Activated CD8-positive, alpha-beta T cell treated with anti-CD3 and anti-CD28 coated beads for 36 hours (primary cell): ENCODE measurements at regions of chr15 and their contacts with region 1.

Region 1: GRCh38 chr15:40307421-40308211 is at the start of gene PLCB2:
- DNase-seq: peak; percentile 84
- ATAC-seq: peak; percentile 78
- H3K4me3 Mint-ChIP-seq: peak within 1 kb of the TSS; percentile 95
- H3K27ac Mint-ChIP-seq: peak within 1 kb of the TSS; percentile 97
- H3K4me1 Mint-ChIP-seq: peaks cover 36% of the 10 kb centered on the region
- H3K27me3 Mint-ChIP-seq: no peaks in the 10 kb centered on the region
- CTCF ChIP-seq: peak; percentile 35
- total RNA-seq, gene PLCB2: 44.6 to 58.8 TPM

Region 2: GRCh38 chr15:40282144-40282868 is 25.3 kb before region 1 on chr15:
- CTCF ChIA-PET with region 1: interaction called, 595 read pairs
- POLR2A ChIA-PET with region 1: interaction called, 22 read pairs
- intact Hi-C with region 1: loop called (anchors 1 kb)
- DNase-seq: peak; percentile 62
- ATAC-seq: peak; percentile 71
- H3K4me3 Mint-ChIP-seq: peak overlapping the region; percentile 58
- H3K27ac Mint-ChIP-seq: no peak overlapping the region
- H3K4me1 Mint-ChIP-seq: no peaks in the 10 kb centered on the region
- H3K27me3 Mint-ChIP-seq: peaks cover 25% of the 10 kb centered on the region
- CTCF ChIP-seq: peak; percentile 66

Region 3: GRCh38 chr15:40290918-40291574 is 16.6 kb before region 1 on chr15:
- CTCF ChIA-PET with region 1: interaction called, 11 read pairs
- POLR2A ChIA-PET with region 1: interaction called, 8 read pairs
- intact Hi-C with region 1: no loop called
- DNase-seq: no peak
- ATAC-seq: no peak
- H3K4me3 Mint-ChIP-seq: no peak overlapping the region
- H3K27ac Mint-ChIP-seq: no peak overlapping the region
- H3K4me1 Mint-ChIP-seq: no peaks in the 10 kb centered on the region
- H3K27me3 Mint-ChIP-seq: no peaks in the 10 kb centered on the region
- CTCF ChIP-seq: no peak

Region 4: GRCh38 chr15:40323239-40323952 is 15.8 kb after region 1 on chr15 and contains the start of gene INAFM2:
- CTCF ChIA-PET with region 1: interaction called, 156 read pairs
- POLR2A ChIA-PET with region 1: interaction called, 37 read pairs
- intact Hi-C with region 1: no loop called
- DNase-seq: peak; percentile 95
- ATAC-seq: peak; percentile 94
- H3K4me3 Mint-ChIP-seq: peak within 1 kb of the TSS; percentile 71
- H3K27ac Mint-ChIP-seq: no peak within 1 kb of the TSS
- H3K4me1 Mint-ChIP-seq: peaks cover 31% of the 10 kb centered on the region
- H3K27me3 Mint-ChIP-seq: no peaks in the 10 kb centered on the region
- CTCF ChIP-seq: peak; percentile 64
- total RNA-seq, gene INAFM2: 15.0 to 16.9 TPM

Region 5: GRCh38 chr15:40338041-40338657 is 30.5 kb after region 1 on chr15:
- CTCF ChIA-PET with region 1: interaction called, 376 read pairs
- POLR2A ChIA-PET with region 1: interaction called, 12 read pairs
- intact Hi-C with region 1: no loop called
- DNase-seq: peak; percentile 88
- ATAC-seq: peak; percentile 96
- H3K4me3 Mint-ChIP-seq: no peak overlapping the region
- H3K27ac Mint-ChIP-seq: no peak overlapping the region
- H3K4me1 Mint-ChIP-seq: peaks cover 14% of the 10 kb centered on the region
- H3K27me3 Mint-ChIP-seq: no peaks in the 10 kb centered on the region
- CTCF ChIP-seq: peak; percentile 92